Esophagus squamous epithelium (tissue), 5 donors: ENCODE measurements at regions of chr5 and their contacts with region 1.

Region 1: DNA sequence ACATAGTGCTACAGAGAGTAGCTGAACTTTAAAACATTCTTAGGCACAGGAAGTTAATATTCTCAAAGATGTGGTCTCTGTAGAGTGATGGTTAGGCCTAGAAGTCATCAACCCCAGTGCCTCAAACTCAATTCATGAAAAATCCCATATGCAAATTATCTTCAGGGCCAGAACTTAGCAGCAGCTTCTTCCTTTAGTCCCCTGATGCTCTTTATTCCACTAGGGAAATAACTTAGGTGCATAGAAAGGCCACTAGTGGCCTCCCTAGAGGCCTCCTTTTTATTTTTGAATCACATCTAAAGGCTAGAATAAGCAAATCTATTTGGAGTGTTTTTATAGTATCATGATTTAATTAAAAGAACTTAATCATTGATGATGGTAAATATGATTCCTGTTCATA is 88.3 kb downstream of the GIN1 start:
- DNase-seq: no peak
- H3K4me3 ChIP-seq: no peak overlapping the region
- H3K27ac ChIP-seq: no peak overlapping the region
- H3K4me1 ChIP-seq: no peaks in the 10 kb centered on the region
- H3K27me3 ChIP-seq: no peaks in the 10 kb centered on the region
- CTCF ChIP-seq: peak in 1 of 6 experiments; percentile 9
- POLR2A ChIP-seq: no peak

Region 2: DNA sequence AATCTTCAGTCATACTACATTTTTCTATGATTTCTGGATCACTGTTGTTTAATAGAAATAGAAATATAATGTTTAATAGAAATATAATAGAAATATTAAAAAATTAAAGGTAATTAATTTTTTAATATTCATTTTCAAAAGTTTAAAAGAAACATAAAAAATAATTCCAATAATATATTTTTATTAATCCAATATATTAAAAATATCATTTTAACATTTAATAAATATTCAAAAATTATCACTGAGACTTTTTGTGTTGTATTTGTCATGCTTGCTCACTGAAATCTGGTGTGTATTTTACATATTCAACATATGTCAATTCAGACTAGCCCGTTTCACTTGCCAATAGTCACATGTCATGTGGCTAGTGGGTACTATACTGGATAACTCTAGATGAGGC is 452.2 kb before region 1 on chr5:
- intact Hi-C with region 1: loop called (anchors 10 kb)
- DNase-seq: no peak
- H3K4me3 ChIP-seq: no peak overlapping the region
- H3K27ac ChIP-seq: no peak overlapping the region
- H3K4me1 ChIP-seq: no peaks in the 10 kb centered on the region
- H3K27me3 ChIP-seq: no peaks in the 10 kb centered on the region
- CTCF ChIP-seq: no peak
- POLR2A ChIP-seq: no peak